ENCODE measurements at regions of chr9 and their contacts with region 1.

Region 1: GRCh38 chr9:71604197-71605063 is 163.9 kb downstream of the CEMIP2 start:
- DNase-seq: no peak
- H3K4me3 ChIP-seq: no peak overlapping the region
- H3K27ac ChIP-seq: no peak overlapping the region
- H3K4me1 ChIP-seq: no peaks in the 10 kb centered on the region
- H3K27me3 ChIP-seq: no peaks in the 10 kb centered on the region
- CTCF ChIP-seq: peak; percentile 66 to 72 (median 71)
- EP300 ChIP-seq: no peak
- POLR2A ChIP-seq: no peak

Region 2: DNA sequence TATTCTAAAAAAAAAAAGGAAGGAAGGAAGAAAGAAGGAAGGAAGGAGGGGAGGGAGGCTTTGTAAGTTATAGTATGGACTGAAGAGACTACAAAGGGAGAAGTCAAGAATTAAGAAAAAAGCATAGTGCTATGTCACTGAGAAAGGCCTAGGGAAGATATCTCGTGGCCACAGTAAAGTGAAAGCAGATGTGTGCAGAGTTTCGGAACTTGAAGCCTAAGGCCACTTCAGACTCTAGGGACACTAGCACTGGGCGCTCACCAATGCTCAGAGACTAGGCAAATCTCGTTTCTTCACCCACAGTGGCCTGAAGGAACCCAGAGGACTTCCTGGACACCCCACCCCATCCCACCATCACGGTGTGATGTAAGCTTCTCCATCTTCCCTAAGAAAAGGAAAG is 301.7 kb before region 1 on chr9:
- intact Hi-C with region 1: no loop called
- DNase-seq: no peak
- H3K4me3 ChIP-seq: no peak overlapping the region
- H3K27ac ChIP-seq: no peak overlapping the region
- H3K4me1 ChIP-seq: no peaks in the 10 kb centered on the region
- H3K27me3 ChIP-seq: no peaks in the 10 kb centered on the region
- CTCF ChIP-seq: no peak
- EP300 ChIP-seq: no peak
- POLR2A ChIP-seq: no peak

Region 3: DNA sequence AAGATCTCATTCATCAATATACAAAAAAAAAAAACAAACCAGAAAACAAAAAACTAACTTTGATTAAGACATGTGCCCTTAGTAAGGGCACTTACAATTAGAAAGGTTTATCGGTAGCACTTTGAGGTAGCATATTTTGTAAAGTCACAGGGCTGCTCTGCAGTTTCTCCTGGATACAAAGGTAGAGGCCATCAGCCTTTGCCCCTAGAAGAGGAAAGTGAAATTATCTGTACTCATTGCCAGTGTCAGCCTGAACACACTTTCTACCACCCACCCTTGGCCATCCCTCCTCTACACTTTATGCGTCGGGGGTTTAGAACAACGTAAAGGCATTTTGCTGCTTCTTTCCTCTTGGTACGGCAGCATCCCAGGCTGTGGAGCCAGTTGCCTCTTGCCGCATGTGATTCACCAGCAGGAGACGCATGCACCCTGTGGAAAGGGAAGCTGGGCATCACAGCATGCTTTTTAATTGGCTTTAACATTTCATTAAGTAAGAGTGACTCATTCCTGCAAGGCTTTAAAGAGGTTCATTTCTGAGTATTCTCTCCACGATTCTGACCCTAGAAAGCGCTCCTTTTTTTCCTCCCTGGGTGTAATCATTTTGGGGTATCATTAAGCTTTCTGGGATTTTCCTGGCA is 79.3 kb after region 1 on chr9:
- intact Hi-C with region 1: loop called (anchors 10 kb)
- DNase-seq: no peak
- H3K4me3 ChIP-seq: no peak overlapping the region
- H3K27ac ChIP-seq: no peak overlapping the region
- H3K4me1 ChIP-seq: peaks cover 15 to 45% (median 29%) of the 10 kb centered on the region in 4 donors
- H3K27me3 ChIP-seq: no peaks in the 10 kb centered on the region
- CTCF ChIP-seq: peak in 2 of 3 experiments; percentile 13 to 54
- EP300 ChIP-seq: no peak
- POLR2A ChIP-seq: no peak

Region 4: DNA sequence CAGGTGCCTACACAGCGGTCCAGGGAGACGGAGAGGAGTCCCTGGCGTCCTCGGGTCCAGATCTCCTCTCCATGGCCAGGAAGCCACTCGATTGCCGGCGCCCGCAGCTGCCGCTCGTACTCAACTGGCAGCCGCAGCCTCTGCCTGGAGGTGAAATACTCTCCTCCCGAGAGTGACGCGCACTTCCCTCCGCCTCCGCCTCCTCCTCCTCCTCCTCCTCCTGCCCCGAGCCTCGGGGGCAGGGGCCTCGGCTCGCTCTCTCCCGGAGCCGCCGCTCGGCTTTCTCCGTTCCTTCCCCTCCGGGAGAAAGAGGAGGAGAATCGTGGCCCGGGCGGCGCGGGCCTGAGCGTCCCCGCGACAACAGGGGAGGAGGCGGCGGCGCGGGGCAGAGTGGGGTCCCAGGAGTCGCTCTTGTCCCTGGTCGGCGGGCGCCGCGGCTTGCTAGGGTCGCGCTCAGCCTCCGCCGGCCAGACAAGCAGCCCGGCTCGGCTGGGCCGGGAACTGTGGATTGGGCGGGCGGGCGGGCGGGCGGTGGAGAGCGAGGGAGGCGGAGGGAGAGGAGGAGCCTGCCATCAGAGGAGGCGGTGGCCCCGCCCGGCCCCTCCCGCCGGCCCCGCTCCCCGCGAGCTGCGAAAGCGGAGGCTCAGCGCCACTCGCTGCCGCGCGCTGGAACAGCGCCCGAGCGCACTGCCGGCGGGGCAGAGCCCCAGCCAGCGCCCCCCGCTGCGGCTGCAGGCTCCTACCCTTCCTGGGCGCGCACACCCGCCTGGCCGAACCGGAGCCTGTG is 164.2 kb after region 1 on chr9 and contains the start of gene CEMIP2:
- intact Hi-C with region 1: loop called (anchors 5 kb)
- DNase-seq: peak; percentile 96
- H3K4me3 ChIP-seq: peak within 1 kb of the TSS; percentile 66 to 83 (median 76)
- H3K27ac ChIP-seq: peak within 1 kb of the TSS; percentile 94 to 98 (median 96)
- H3K4me1 ChIP-seq: peaks cover 19 to 52% (median 51%) of the 10 kb centered on the region in 4 donors
- H3K27me3 ChIP-seq: no peaks in the 10 kb centered on the region
- CTCF ChIP-seq: peak; percentile 37 to 56 (median 51)
- EP300 ChIP-seq: no peak
- POLR2A ChIP-seq: peak; percentile 44
- total RNA-seq, gene CEMIP2: 18.5 to 144 (median 26.8) TPM

Region 5: DNA sequence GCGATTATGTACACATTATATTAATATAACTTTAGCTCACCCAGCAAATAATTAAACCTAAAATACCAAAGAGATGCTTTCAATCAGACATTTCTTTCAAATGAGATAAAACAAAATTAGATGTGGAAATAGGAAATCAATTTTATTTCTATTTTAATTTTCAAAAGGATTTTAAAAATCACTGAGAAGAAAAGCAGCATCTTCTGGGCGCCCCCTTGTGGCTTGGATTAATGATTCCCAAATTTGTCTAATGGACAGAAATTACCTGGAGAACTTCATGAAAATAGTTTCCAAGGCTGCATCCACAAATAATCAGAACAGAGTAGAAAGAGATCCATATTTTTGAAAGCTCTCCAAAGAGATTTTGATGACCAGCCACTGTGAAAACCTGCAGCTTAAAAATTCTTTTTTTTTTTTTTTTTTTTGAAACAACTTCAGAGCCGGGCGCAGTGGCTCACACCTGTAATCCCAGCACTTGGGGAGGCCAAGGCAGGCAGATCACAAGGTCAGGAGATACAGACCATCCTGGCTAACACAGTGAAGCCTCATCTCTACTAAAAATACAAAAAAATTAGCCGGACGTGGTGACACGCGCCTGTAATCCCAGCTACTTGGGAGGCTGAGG is 214.8 kb after region 1 on chr9:
- intact Hi-C with region 1: loop called (anchors 5 kb)
- DNase-seq: no peak
- H3K4me3 ChIP-seq: no peak overlapping the region
- H3K27ac ChIP-seq: no peak overlapping the region
- H3K4me1 ChIP-seq: no peaks in the 10 kb centered on the region
- H3K27me3 ChIP-seq: no peaks in the 10 kb centered on the region
- CTCF ChIP-seq: peak; percentile 56 to 76 (median 69)
- EP300 ChIP-seq: no peak
- POLR2A ChIP-seq: no peak

Region 6: DNA sequence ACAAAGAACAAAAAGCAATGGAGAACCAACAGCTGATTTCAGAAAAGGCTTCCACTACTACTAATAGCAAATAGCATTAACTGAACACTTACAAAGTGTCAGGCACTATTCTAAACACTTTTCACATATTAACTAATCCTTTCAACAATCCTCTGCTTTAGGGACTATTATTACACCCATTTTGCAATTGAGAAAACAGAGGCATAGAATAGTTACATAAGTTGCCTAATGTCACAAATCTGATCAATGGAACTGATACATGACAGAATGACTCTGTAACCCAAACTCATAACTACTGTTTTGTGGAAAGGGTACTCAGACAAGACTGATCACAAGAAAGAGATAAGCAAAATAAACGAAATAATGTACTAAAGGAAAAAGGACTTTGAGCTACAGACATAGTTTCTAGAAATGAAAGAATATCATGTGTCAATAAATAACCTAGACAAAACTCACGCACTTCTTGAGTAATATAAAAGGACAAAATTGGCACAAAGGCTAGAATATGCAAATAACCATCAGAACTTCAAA is 275.3 kb after region 1 on chr9:
- intact Hi-C with region 1: loop called (anchors 5 kb)
- DNase-seq: no peak
- H3K4me3 ChIP-seq: no peak overlapping the region
- H3K27ac ChIP-seq: no peak overlapping the region
- H3K4me1 ChIP-seq: no peaks in the 10 kb centered on the region
- H3K27me3 ChIP-seq: no peaks in the 10 kb centered on the region
- CTCF ChIP-seq: no peak
- EP300 ChIP-seq: no peak
- POLR2A ChIP-seq: no peak

Measured in esophagus muscularis mucosa (tissue), 4 donors.